ENCODE measurements at regions of chr21 and their contacts with region 1.

Region 1: DNA sequence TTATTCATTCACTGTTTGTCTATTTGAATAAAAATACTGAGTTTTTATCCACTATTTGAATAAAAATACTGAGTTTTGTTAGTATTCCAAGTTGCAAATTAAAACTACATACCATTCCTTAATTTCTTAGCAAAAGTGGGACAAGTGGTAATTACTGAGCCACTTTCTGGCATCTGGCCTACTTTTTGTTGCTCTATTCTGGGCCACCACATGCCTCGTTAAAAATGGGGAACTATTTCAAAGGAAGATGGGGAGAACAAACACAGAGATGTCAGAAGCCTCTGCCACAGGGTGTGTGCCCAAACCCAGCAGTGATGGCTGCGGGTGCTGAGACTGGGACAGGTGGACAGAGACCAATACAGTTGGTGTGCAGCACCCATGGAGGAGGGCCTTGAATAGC is 14.6 kb downstream of the PIGP start:
- DNase-seq: no peak
- H3K4me3 ChIP-seq: no peak overlapping the region
- H3K27ac ChIP-seq: no peak overlapping the region
- H3K4me1 ChIP-seq: peaks cover 0 to 11% (median 9%) of the 10 kb centered on the region in 4 donors
- H3K27me3 ChIP-seq: no peaks in the 10 kb centered on the region
- CTCF ChIP-seq: no peak
- EP300 ChIP-seq: no peak
- POLR2A ChIP-seq: no peak

Region 2: DNA sequence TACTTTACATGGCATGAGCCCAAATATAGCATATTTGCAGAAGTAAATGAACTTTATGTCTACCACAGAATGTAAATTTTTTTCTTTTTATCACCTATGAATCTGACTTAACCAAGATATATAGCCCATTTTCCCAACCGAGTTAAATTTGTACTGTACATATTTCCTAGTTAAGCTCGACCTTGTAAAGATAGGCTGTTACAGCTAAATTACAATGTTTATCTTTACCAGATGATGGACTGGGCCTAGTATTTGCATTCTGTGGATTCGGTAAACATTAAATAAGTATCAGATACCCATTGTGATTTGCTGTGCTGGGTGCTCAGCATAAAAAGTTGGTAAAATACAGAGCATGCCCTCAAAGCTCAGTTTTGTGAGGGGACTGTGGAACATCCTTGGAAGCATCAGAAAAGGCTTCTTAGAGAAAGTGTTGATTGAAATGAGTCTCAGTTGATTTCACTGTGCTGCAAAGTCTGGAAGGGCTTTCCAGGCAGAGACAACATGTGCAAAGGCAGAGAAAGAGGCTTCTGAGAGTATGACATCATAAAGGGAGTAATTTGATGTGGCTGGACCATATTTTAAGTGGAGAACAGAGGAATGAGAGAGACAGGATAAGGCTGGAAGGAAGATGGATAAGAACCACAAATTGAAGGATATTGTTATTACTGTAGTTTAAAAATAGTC is 710.8 kb before region 1 on chr21:
- in situ Hi-C with region 1: no loop called
- intact Hi-C with region 1: no loop called
- DNase-seq: no peak
- H3K4me3 ChIP-seq: no peak overlapping the region
- H3K27ac ChIP-seq: no peak overlapping the region
- H3K4me1 ChIP-seq: peaks cover 0 to 10% (median 1%) of the 10 kb centered on the region in 4 donors
- H3K27me3 ChIP-seq: no peaks in the 10 kb centered on the region
- CTCF ChIP-seq: no peak
- EP300 ChIP-seq: no peak
- POLR2A ChIP-seq: no peak

Region 3: GRCh38 chr21:36773117-36773516 is 285.1 kb before region 1 on chr21:
- in situ Hi-C with region 1: no loop called
- intact Hi-C with region 1: no loop called
- DNase-seq: peak; percentile 82
- H3K4me3 ChIP-seq: no peak overlapping the region
- H3K27ac ChIP-seq: no peak overlapping the region
- H3K4me1 ChIP-seq: peaks cover 0 to 28% (median 16%) of the 10 kb centered on the region in 4 donors
- H3K27me3 ChIP-seq: no peaks in the 10 kb centered on the region
- CTCF ChIP-seq: no peak
- EP300 ChIP-seq: no peak
- POLR2A ChIP-seq: no peak

Region 4: DNA sequence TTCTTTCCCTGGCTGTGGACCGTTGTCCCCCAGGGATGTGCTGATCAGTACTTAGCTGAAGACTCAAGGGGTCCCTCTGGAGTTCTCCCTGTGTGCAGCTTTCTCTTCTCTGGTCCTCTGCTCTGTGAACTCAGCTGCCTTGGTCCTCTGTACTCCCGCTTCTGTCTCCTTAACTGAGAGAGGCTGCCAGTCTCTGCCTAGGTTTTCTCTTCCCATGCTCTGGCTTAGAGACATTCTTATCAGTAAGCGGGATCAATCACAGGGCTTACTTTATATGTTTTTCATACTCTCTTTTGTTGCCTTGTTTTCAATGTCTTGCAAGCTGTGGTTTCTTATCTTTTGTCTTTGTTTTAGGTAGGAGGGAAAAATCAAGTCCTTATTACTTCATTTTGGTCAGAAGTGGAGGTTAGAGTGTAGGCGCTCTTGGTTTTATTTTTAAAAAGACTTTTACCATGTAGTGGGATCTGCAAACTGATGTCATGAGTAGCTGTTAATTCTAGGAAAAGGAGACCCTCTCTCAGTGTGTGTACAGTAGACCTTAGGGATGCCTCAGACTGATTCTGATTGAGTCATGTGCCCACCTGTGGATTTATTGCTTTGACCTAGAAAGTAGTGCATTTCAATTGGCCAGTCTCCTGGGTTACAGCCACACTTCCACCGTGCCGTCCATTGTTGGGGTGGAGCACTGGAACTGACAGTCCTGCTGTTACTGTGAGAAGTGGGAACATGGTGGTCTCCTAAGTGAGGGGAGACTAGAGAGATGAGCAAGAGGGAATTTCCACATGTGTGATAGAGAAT is 61.4 kb after region 1 on chr21:
- in situ Hi-C with region 1: no loop called
- intact Hi-C with region 1: loop called (anchors 10 kb)
- DNase-seq: no peak
- H3K4me3 ChIP-seq: no peak overlapping the region
- H3K27ac ChIP-seq: no peak overlapping the region
- H3K4me1 ChIP-seq: no peaks in the 10 kb centered on the region
- H3K27me3 ChIP-seq: no peaks in the 10 kb centered on the region
- CTCF ChIP-seq: no peak
- EP300 ChIP-seq: no peak
- POLR2A ChIP-seq: no peak

Measured in transverse colon (tissue), 4 donors.